Heart right ventricle (tissue), 16 donors: ENCODE measurements at regions of chr9 and their contacts with region 1.

Region 1: DNA sequence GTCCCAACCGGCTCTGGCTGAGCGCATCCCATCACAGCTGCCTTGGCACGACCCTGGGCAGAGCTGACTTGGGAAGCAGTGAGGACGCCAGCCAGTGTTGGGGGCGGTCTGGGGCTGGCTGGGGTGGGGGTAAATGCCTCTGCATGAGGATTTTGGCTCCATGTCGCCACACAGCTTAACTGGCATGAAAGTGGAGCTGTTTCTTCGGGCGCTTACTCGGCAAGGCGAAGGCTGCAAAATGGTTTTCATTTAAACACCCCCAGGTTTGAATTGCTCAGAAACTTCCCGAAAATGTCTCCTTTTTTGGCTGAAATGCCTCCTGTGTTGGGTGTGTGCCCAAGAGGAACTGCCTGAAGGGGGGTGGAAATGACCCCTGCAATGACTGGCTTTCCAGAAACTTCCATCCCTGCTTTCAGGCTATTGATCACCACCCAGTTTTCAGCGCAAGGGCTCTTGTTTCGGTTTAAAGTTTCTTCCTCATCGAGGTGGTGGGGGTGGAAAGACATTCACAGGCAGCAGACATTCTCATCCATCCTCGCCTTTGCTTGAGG is 38.3 kb downstream of the PTGES start:
- DNase-seq: no peak
- ATAC-seq: no peak
- H3K4me3 ChIP-seq: no peak overlapping the region
- H3K27ac ChIP-seq: no peak overlapping the region
- H3K4me1 ChIP-seq: peaks cover 0 to 32% (median 3%) of the 10 kb centered on the region in 9 donors
- H3K27me3 ChIP-seq: peaks cover 0 to 17% (median 0%) of the 10 kb centered on the region in 7 donors
- CTCF ChIP-seq: no peak

Region 2: DNA sequence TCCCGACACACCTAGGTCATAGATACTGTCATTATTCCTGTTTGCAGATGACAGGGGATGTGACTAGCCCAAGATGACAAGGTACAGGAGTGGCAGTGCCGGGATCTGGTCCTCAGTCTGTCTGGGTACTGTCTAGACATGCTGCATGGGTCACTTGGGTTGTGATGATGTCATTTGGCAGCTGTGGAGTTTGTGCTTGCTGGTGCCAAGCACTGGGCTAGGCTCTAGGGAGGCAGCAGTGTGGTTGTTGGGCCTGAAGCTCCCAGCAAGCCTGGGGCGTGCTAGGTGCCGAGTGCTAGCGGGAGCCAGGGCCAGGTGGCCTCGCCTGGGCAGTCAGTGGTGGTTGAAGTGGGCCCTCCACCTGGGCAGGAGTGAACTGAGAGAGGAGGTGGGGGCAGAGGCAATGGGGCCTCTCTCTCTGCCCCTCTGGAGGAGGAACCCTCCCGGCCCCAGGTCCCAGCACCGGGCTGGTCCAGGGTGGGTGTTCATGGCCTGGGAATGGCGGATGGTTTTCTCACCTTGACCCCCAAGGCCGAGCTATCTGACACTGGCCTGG is 63.8 kb before region 1 on chr9:
- intact Hi-C with region 1: loop called in 1 of 10 experiments (anchors 5 kb)
- DNase-seq: no peak
- ATAC-seq: no peak
- H3K4me3 ChIP-seq: no peak overlapping the region
- H3K27ac ChIP-seq: no peak overlapping the region
- H3K4me1 ChIP-seq: peaks cover 0 to 11% (median 0%) of the 10 kb centered on the region in 9 donors
- H3K27me3 ChIP-seq: no peaks in the 10 kb centered on the region
- CTCF ChIP-seq: no peak

Region 3: DNA sequence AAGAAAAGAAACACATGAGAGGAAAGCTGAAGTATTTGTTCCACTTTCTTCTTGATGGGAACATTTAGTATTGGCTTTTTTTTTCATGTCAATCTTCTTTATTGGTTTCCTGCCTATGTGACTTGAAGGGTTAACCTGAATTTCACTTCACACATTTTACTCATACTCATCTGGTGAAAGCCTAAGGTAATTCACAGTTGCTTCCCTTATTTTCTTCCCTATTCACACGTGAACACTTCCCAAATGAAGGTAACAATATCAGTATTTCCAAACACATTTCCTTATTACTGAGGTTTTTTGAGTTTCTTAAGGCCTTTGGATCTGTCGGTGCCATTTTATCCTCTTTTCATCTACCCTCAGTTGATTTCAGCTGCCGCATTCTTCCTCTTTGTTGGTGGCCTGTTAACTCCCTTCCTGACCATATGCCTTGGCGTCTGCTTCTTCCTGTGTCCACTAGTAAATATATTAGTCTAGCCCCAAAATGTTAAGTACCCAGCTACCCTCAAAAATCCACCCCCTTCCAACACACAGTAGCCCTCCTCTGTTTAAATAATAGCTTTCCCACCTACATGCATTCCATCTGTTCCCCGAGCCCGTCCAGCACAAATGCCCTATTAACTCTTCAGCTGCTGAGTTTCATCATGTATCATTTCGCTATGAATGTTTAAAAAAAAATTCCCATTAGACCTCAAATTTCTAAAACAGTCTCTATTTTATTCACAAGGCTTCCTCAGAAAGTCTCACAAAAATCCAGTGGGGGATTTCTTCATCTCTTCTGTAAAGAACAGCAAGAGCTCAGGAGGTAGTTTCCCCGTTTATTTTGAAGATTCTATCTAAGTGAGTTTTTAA is 217.9 kb after region 1 on chr9:
- intact Hi-C with region 1: no loop called
- DNase-seq: peak in 1 of 2 donors; percentile 13
- ATAC-seq: peak in 5 of 8 donors; percentile 38 to 61 (median 48)
- H3K4me3 ChIP-seq: peak overlapping the region in 3 of 10 donors; percentile 2 to 4 (median 3)
- H3K27ac ChIP-seq: peak overlapping the region in 8 of 10 donors; percentile 9 to 80 (median 72)
- H3K4me1 ChIP-seq: peaks cover 3 to 61% (median 40%) of the 10 kb centered on the region in 9 donors
- H3K27me3 ChIP-seq: no peaks in the 10 kb centered on the region
- CTCF ChIP-seq: no peak